PC-9 (cell line): ENCODE measurements at regions of chr1 and their contacts with region 1.

Region 1: DNA sequence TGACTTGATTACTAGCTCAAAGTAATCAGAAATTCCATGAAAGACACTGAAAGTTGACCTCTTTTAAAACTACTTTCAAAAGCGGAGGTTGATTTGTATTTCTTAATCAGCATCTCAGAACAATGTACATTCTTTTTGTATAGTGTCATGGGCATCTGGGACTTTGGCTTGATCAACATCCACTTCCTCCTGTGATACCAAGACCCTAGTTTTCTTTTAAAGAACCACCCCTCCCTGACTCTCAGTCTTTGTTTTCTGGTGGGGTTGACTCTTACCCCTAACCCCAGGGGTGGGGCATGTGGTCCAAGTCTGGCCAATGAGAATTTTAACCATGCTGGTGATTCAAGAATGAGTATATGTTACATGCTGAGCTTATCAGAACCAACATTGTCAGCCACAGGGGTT is 21.7 kb upstream of the IRF2BP2 start:
- DNase-seq: peak; percentile 77 to 97
- H3K4me3 ChIP-seq: no peak overlapping the region
- H3K27ac ChIP-seq: peak overlapping the region; percentile 88
- H3K4me1 ChIP-seq: peaks cover 38% of the 10 kb centered on the region
- H3K27me3 ChIP-seq: no peaks in the 10 kb centered on the region
- CTCF ChIP-seq: no peak

Region 2: DNA sequence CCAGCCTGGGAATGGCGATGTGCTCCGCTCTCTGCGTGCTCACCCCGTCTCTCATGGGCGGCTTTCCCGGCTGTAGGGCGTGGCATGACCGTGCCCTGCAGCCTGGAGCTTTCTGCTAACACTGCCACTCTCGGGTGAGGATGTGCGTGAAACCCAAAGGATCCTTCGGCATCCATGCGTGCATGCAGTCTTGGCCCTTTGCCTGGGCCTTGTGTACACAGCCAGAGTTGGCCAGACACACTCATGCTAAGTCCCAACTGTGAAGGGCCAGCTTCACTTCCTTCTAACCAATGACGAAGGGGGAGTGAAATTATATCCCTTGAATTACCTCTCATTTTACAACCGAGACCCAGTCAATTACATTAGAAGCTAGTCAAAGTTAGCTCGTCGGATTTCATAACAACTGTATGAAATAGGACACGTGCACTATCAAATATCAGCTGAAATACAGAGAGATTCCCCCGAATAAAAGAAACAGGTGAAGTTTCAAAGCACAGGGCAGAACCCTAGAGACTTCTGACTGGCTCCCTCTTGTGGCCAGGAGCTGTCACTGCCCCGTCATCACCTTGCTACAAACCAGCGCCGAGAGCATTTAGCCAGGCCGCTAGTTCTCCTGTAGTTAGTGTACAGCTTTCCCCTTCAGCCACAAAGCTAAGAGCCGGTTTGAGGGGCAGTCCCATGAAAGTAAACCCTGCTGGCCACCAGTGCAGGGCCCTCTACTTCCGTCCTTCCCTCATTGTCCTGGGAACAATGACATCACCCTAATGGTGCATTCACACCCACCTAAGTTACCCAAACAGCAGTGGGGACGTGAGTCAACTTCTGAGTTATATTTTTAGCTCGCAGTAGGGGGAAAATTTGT is 321.9 kb before region 1 on chr1:
- CTCF ChIA-PET with region 1: no interaction called
- POLR2A ChIA-PET with region 1: no interaction called
- intact Hi-C with region 1: no loop called
- DNase-seq: peak; percentile 58 to 67
- H3K4me3 ChIP-seq: no peak overlapping the region
- H3K27ac ChIP-seq: no peak overlapping the region
- H3K4me1 ChIP-seq: peaks cover 2% of the 10 kb centered on the region
- H3K27me3 ChIP-seq: no peaks in the 10 kb centered on the region
- CTCF ChIP-seq: peak; percentile 92

Region 3: DNA sequence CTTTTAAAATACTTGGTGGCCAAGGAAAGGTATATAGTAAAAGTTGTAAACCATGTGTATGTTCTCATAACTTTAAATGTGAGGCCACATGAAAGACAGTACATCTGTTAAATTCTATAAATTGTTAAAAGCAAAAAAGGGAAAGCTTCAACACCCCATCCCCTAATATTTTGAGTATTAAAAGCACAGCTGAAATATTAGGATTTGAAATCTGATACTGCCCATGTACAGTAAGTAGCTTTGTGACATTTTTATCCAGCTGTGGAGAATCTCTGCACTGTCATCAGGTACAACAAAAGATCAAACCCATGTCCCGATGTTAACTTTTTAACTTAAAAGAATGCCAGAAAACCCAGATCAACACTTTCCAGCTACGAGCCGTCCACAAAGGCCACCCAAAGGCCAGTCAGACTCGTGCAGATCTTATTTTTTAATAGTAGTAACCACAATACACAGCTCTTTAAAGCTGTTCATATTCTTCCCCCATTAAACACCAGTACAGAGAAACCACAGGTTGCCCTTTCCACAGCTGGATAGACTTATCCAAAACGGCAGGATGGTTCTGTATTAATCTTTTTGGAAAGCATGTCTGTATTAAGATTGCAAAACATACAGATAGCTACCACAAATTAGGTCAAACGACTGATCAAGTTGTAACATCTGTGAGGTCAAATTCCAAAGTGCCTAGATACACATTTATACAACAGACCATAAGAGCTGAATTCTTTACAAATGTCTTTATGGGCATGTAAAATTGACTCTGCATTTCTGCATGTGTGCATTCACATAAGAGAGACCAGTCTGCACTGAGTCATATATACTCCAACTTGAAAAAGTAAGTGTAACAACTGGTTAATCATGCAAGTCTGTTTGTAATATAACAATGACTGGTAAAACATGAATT is 27.0 kb before region 1 on chr1:
- CTCF ChIA-PET with region 1: no interaction called
- POLR2A ChIA-PET with region 1: no interaction called
- intact Hi-C with region 1: no loop called
- DNase-seq: no peak
- H3K4me3 ChIP-seq: peak overlapping the region; percentile 81
- H3K27ac ChIP-seq: peak overlapping the region; percentile 99
- H3K4me1 ChIP-seq: peaks cover 39% of the 10 kb centered on the region
- H3K27me3 ChIP-seq: no peaks in the 10 kb centered on the region
- CTCF ChIP-seq: no peak

Region 4: GRCh38 chr1:234670967-234671626 is 39.4 kb after region 1 on chr1:
- CTCF ChIA-PET with region 1: no interaction called
- POLR2A ChIA-PET with region 1: no interaction called
- intact Hi-C with region 1: no loop called
- DNase-seq: no peak
- H3K4me3 ChIP-seq: no peak overlapping the region
- H3K27ac ChIP-seq: no peak overlapping the region
- H3K4me1 ChIP-seq: no peaks in the 10 kb centered on the region
- H3K27me3 ChIP-seq: no peaks in the 10 kb centered on the region
- CTCF ChIP-seq: no peak

Region 5: DNA sequence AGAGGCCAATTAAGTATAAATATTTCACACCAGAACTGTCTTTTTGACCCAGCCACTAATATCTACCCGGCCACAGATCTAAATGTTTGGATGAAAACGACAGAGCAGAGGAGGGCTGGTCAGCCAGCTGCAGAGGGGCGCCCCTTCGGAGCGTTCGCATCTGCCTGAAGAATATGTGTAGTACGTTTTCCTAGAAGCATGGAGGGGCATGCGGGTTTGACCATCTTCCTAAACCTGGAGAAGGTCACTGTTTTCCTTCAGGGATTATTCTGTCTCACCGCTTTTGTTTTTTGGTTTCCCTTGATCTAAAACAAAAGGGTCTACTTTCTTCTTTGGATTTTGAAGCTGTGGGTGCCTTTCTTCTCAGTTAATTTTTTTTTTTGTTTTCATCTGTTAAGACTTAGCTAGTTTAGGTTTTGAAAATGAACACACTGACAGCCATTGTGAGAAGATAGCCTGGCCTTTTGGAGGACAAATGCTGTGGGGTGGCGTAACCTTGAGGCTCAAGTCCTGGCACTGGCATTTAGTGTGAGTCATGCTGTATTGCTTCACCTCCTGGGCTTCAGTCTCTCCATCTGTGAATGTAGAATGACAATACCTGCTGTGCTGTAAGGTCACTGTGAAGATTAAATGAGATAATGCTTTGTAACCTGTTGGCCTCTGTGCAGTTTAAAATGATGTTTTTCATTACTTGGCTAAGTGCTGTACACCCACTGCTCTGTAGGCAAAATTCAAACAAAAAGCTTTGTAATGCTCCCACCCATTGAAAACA is 52.3 kb after region 1 on chr1:
- CTCF ChIA-PET with region 1: no interaction called
- POLR2A ChIA-PET with region 1: no interaction called
- intact Hi-C with region 1: loop called (anchors 2 kb)
- DNase-seq: peak; percentile 56 to 82
- H3K4me3 ChIP-seq: 0 out of 2 replicates have a peak overlapping the region, but pooled peaks have one; percentile 3
- H3K27ac ChIP-seq: peak overlapping the region; percentile 10
- H3K4me1 ChIP-seq: peaks cover 17% of the 10 kb centered on the region
- H3K27me3 ChIP-seq: no peaks in the 10 kb centered on the region
- CTCF ChIP-seq: no peak

Region 6: GRCh38 chr1:234868296-234869147 is 236.8 kb after region 1 on chr1:
- CTCF ChIA-PET with region 1: no interaction called
- POLR2A ChIA-PET with region 1: interaction called, 26 read pairs
- intact Hi-C with region 1: no loop called
- DNase-seq: no peak
- H3K4me3 ChIP-seq: peak overlapping the region; percentile 94
- H3K27ac ChIP-seq: peak overlapping the region; percentile 98
- H3K4me1 ChIP-seq: peaks cover 68% of the 10 kb centered on the region
- H3K27me3 ChIP-seq: no peaks in the 10 kb centered on the region
- CTCF ChIP-seq: no peak

Region 7: GRCh38 chr1:235060607-235061470 is 429.1 kb after region 1 on chr1:
- CTCF ChIA-PET with region 1: interaction called, 16 read pairs
- POLR2A ChIA-PET with region 1: no interaction called
- intact Hi-C with region 1: no loop called
- DNase-seq: peak; percentile 88 to 99
- H3K4me3 ChIP-seq: peak overlapping the region; percentile 4; the same call in 1 of the 2 replicates
- H3K27ac ChIP-seq: peak overlapping the region; percentile 97
- H3K4me1 ChIP-seq: peaks cover 49% of the 10 kb centered on the region
- H3K27me3 ChIP-seq: no peaks in the 10 kb centered on the region
- CTCF ChIP-seq: no peak